Activated CD8-positive, alpha-beta T cell treated with anti-CD3 and anti-CD28 coated beads, Interleukin-2, amount 10 ng/mL, durations not matched to agents 7 days and 5 days (primary cell): ENCODE measurements at regions of chr9 and their contacts with region 1.

Region 1: DNA sequence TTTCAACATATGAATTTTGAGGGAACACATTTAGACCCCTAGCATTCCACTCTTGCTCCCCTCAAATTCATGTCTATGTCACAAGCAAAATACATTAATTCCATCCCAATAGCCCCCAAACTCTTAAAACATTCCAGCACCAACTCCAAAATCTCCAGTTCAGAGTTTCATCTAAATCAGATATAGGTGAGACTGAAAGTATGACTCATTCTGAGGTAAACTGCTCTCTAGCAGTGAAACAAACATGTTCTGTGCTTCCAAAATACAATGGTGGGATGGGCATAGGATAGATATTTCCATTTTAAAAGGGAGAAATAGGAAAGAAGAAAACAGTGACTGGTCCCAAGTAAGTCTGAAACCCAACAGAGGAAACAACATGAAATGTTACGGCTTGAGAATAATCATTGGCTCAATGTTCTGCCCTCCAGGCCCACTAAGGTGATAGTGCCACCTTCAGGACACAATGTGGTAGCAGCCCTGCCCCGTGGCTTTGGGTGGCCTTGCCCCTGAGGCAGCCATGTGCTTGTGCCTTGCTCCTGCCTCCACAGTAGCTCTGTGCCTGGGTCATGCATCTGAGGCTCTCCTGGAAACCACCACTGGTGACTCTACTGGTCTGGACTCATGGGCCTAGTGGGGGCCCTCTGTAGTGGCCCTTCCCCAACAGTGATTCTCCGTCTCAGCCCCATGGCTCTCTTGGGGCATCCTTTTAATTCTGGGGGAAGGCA is 36.4 kb upstream of the IPPK start:
- DNase-seq: peak; percentile 68
- ATAC-seq: peak; percentile 91
- H3K4me3 Mint-ChIP-seq: no peak overlapping the region
- H3K27ac Mint-ChIP-seq: peak overlapping the region; percentile 23
- H3K4me1 Mint-ChIP-seq: peaks cover 23% of the 10 kb centered on the region
- H3K27me3 Mint-ChIP-seq: no peaks in the 10 kb centered on the region

Region 2: DNA sequence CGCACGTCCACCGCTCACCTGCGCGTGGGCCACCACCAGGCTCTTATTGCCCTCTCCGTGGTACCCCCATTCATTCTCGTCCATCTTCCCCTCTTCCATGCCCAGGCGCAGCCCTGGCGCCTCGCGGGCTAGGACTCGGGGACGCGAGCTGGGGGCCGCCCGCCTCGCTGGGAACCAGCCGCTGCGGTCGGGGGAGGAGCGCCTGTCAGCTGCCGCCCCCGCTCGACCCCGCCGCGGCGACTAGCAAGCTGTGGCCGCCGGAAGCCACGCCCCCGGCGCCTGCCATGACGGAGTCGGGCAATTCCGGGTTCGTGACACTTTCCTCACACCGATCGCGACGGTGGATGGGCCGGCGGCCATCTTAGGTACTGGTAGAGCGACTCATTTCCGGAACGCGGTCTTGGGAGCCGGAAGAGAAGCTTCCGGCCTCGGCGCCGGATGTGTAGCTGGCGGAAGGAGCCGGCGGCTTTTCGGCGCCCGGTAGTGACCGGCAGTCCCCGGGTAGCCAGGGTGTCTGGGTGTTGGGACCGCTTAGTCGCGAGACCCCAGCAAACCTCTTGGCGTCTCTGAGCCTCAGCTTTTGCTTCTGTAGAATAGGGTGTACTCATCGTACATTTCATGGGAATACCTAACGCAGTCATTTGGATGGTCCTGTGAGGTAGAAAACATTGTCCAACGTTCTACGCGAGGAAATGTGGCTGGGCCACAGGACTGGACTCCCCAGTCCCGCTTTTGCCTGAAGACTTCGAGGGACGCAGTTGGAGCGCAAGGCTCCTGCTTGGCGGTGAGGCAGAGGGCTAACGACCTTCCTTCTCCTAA is 36.3 kb before region 1 on chr9 and contains the start of gene IPPK:
- CTCF ChIA-PET with region 1: interaction called, 14 read pairs
- POLR2A ChIA-PET with region 1: interaction called, 4 read pairs
- DNase-seq: peak; percentile 98
- ATAC-seq: peak; percentile 92
- H3K4me3 Mint-ChIP-seq: peak within 1 kb of the TSS; percentile 96
- H3K27ac Mint-ChIP-seq: peak within 1 kb of the TSS; percentile 96
- H3K4me1 Mint-ChIP-seq: peaks cover 42% of the 10 kb centered on the region
- H3K27me3 Mint-ChIP-seq: no peaks in the 10 kb centered on the region
- total RNA-seq, gene IPPK: 8.7 to 9.7 TPM

Region 3: GRCh38 chr9:92728831-92729734 is 22.7 kb after region 1 on chr9:
- CTCF ChIA-PET with region 1: no interaction called
- POLR2A ChIA-PET with region 1: no interaction called
- DNase-seq: no peak
- ATAC-seq: no peak
- H3K4me3 Mint-ChIP-seq: no peak overlapping the region
- H3K27ac Mint-ChIP-seq: no peak overlapping the region
- H3K4me1 Mint-ChIP-seq: peaks cover 22% of the 10 kb centered on the region
- H3K27me3 Mint-ChIP-seq: no peaks in the 10 kb centered on the region

Region 4: DNA sequence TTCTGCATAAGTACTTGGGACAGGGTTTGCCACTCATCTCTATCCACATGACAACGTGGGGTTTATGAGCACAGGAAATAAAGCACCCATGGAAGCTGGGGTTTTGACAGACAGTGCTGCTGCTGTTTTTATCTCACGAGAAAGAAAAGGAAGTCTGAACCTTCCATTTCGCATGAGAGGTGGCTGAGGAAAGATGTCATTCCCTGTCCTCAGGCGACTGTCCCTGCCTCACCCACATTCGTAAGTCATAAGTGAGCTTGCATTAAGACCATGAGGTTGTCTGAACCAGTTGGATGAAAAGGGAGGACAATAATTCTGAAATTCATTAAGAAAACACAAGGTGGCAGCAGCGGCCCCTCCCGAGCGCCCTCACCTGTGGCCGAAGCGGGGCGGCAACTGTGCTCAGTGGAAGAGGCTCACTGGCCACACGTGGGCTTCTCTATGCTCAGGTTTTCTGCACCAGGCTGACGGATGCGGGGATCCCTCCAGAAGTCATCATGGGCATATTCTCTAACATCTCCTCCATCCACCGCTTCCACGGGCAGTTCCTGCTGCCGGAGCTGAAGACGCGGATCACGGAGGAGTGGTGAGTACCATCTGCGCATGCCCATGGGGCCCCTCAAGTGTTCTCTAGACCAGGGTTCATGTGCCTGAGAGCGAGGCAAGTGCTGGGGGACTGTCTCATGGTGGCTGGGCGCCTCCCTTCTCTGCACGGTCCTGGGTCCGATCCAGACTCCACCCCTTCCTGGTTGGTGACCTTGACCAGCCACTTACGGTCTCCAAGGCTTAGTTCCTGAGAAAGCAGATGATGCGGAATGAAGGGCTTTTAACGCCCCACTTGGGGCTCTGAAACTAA is 297.4 kb after region 1 on chr9:
- CTCF ChIA-PET with region 1: no interaction called
- POLR2A ChIA-PET with region 1: no interaction called
- DNase-seq: peak; percentile 76
- ATAC-seq: peak; percentile 88
- H3K4me3 Mint-ChIP-seq: no peak overlapping the region
- H3K27ac Mint-ChIP-seq: peak overlapping the region; percentile 83
- H3K4me1 Mint-ChIP-seq: peaks cover 46% of the 10 kb centered on the region
- H3K27me3 Mint-ChIP-seq: no peaks in the 10 kb centered on the region